ENCODE measurements at regions of chr16 and their contacts with region 1.

Region 1: GRCh38 chr16:11255737-11256660 is at the start of gene SOCS1:
- DNase-seq: peak; percentile 81 to 83
- ATAC-seq: peak; percentile 67 to 75
- H3K4me3 ChIP-seq: peak within 1 kb of the TSS; percentile 81
- H3K27ac ChIP-seq: peak within 1 kb of the TSS; percentile 94 to 95
- H3K4me1 ChIP-seq: 0 out of 3 replicates have a peak, but pooled peaks cover 5% of the 10 kb centered on the region
- CTCF ChIP-seq: peak; percentile 94
- EP300 ChIP-seq: no peak
- POLR2A ChIP-seq: peak; percentile 99
- RAD21 ChIP-seq: peak; percentile 55 to 79
- polyA plus RNA-seq, gene SOCS1: 0.15 and 0.16 TPM in 2 replicates

Region 2: GRCh38 chr16:10949370-10949970 is 306.5 kb before region 1 on chr16:
- CTCF ChIA-PET with region 1: interaction called, 37 read pairs
- POLR2A ChIA-PET with region 1: interaction called, 8 read pairs
- DNase-seq: peak in 1 of 2 experiments; percentile 42
- ATAC-seq: peak; percentile 24 to 65; a peak in 3 of 6 replicates
- H3K4me3 ChIP-seq: no peak overlapping the region
- H3K27ac ChIP-seq: no peak overlapping the region
- H3K4me1 ChIP-seq: peaks cover 21% of the 10 kb centered on the region; the same call in 2 of the 3 replicates
- CTCF ChIP-seq: no peak
- EP300 ChIP-seq: no peak
- POLR2A ChIP-seq: no peak
- RAD21 ChIP-seq: no peak

Region 3: GRCh38 chr16:10971560-10971961 is 284.4 kb before region 1 on chr16:
- CTCF ChIA-PET with region 1: interaction called, 364 read pairs
- POLR2A ChIA-PET with region 1: interaction called, 30 read pairs
- DNase-seq: peak; percentile 51 to 77
- ATAC-seq: peak; percentile 63 to 81; a peak in 4 of 6 replicates
- H3K4me3 ChIP-seq: no peak overlapping the region
- H3K27ac ChIP-seq: peak overlapping the region in 1 of 2 experiments; percentile 15; a peak in 1 of 6 replicates
- H3K4me1 ChIP-seq: no peaks in the 10 kb centered on the region
- CTCF ChIP-seq: peak; percentile 80
- EP300 ChIP-seq: no peak
- POLR2A ChIP-seq: no peak
- RAD21 ChIP-seq: peak; percentile 89 to 91

Region 4: DNA sequence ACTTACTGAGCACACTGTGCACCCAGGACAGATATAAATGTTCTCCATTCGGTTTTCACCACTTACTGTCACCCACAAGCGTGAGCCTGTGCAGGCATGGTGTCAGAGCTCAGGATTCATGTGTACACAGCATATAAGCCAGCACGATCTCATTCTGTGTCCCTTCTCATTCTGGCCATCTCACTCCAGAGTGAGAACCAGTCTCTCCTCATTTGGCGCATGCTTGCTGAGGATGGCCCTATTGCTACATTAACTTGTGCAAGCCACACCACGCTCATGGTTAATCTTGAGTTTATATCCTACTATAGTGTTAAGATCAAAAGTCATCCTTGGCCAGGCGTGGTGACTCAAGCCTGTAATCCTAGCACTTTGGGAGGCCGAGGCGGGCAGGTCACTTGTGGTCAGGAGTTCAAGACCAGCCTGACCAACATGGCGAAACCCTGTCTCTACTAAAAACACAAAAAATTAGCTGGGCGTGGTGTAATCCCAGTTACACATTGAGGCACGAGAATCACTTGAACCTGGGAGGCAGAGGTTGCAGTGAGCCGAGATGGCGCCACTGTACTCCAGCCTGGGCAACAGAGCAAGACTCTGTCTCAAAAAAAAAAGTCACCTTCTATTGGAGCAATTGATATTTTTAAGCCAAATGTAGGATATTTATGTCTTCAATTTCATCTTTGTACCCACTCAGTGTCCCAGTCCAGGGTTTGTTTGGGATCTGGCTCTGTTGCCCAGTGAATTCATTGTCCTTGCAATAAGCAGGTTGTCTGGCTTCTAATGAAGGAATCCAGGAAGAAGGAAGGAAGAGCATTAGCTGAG is 20.9 kb before region 1 on chr16:
- CTCF ChIA-PET with region 1: interaction called, 14 read pairs
- POLR2A ChIA-PET with region 1: interaction called, 4 read pairs
- DNase-seq: no peak
- ATAC-seq: no peak
- H3K4me3 ChIP-seq: no peak overlapping the region
- H3K27ac ChIP-seq: no peak overlapping the region
- H3K4me1 ChIP-seq: no peaks in the 10 kb centered on the region
- CTCF ChIP-seq: no peak
- EP300 ChIP-seq: no peak
- POLR2A ChIP-seq: no peak
- RAD21 ChIP-seq: no peak

Region 5: DNA sequence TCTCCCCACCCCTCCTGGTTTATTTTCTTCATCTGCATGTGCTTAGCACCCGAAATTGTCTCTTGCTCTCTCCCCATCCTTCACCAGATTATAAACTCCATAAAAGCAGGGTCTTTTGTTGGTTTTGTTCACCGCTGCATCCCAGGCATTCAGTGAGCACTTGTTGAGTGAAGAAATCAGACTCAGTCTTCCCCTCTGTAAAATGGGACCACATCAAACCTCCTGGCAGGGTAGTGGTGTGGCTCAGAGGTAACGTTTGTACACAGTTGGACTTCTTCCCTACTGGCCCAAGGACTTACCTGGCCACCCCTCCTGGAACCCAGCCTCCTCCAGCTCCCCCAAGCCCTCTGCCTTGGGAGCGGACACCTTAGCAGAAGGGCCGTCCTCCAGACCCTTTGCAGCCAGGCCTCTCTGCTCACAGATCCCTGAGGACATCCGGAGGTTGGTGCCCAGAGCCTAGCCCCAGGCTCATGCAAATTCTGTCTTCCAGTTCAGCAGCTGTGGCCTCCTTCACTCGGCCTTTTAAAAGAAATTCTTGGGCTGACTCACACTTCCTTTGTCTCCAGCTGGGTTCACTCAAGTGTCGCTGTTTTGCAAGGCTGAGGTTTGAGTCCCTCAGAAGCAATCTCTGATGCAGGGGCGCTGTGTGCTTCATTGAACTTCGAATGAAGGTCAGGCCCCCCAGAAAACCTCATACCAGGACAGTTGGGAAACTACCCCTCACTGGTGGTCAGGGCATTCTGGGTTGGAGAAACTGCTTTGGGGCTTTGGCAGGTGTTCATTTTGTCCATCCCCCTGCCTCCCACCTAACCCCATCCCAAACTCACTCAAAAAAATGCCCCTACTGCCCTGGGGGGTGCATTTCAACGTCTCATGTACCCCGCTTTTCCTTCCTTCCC is 72.4 kb after region 1 on chr16:
- CTCF ChIA-PET with region 1: interaction called, 7 read pairs
- POLR2A ChIA-PET with region 1: interaction called, 14 read pairs
- DNase-seq: peak; percentile 71 to 78
- ATAC-seq: peak; percentile 86 to 94
- H3K4me3 ChIP-seq: peak overlapping the region; percentile 33; the same call in 2 of the 3 replicates
- H3K27ac ChIP-seq: peak overlapping the region; percentile 81 to 90
- H3K4me1 ChIP-seq: peaks cover 24% of the 10 kb centered on the region
- CTCF ChIP-seq: no peak
- EP300 ChIP-seq: no peak
- POLR2A ChIP-seq: no peak
- RAD21 ChIP-seq: 0 out of 5 replicates have a peak, but pooled peaks of 1 of the 2 experiments have one; percentile 21

Region 6: GRCh38 chr16:11356573-11357331 is 100.8 kb after region 1 on chr16:
- CTCF ChIA-PET with region 1: interaction called, 13 read pairs
- POLR2A ChIA-PET with region 1: interaction called, 9 read pairs
- DNase-seq: peak; percentile 58 to 74
- ATAC-seq: peak; percentile 80 to 90
- H3K4me3 ChIP-seq: no peak overlapping the region
- H3K27ac ChIP-seq: peak overlapping the region in 1 of 2 experiments; percentile 58; a peak in 2 of 6 replicates
- H3K4me1 ChIP-seq: peaks cover 18% of the 10 kb centered on the region
- CTCF ChIP-seq: peak; percentile 60
- EP300 ChIP-seq: no peak
- POLR2A ChIP-seq: no peak
- RAD21 ChIP-seq: peak; percentile 77 to 79

Measured in A549 (cell line).